A549 (cell line): ENCODE measurements at regions of chr5 and their contacts with region 1.

Region 1: DNA sequence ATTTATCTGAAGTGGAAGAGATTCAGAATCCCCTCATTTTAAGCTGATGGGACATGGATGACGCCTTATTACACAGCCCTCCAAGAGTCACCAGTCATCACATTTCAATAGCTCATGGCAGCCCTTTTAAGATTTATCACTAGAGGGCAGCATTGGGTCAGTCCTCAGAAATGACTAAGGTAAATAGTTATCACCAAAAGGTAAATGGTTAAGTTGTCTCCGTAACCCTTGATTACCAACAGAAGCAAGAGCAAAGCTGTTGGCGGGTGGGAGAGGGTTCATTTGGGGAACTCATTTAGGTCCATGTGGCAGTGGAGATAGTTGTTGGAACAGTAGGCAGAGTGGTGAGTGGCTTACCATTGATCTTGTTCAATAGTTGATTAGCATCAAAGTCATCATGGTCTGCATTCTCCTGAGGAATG is 12.0 kb upstream of the C9 start:
- DNase-seq: peak; percentile 65 to 67
- ATAC-seq: peak; percentile 85 to 95; a peak in 5 of 6 replicates
- H3K4me3 ChIP-seq: no peak overlapping the region
- H3K27ac ChIP-seq: no peak overlapping the region; a peak in 1 of 6 replicates
- H3K4me1 ChIP-seq: no peaks in the 10 kb centered on the region
- CTCF ChIP-seq: peak; percentile 95
- EP300 ChIP-seq: no peak
- POLR2A ChIP-seq: no peak
- RAD21 ChIP-seq: peak; percentile 96 to 97

Region 2: DNA sequence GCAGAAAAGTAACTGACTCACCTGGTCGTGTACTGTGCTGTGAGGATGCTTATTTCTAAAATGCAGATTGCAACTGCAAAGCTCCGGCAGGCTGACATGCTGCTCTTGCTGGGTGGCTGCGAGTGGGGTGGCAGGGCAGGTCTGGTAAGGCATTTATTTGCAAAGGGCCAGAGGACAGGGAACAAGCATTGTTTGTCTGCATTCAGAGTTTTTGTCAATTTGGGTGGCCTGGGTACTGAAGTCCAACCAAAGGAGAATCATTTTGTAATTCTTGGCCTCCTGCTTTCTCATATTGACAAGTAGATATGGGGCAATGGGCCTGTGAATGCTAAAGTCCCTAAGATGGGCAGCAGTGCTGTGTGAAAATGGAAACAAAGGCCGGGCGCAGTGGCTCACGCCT is 11.9 kb before region 1 on chr5 and contains the start of gene C9:
- CTCF ChIA-PET with region 1: interaction called, 29 read pairs
- POLR2A ChIA-PET with region 1: no interaction called
- DNase-seq: no peak
- ATAC-seq: no peak
- H3K4me3 ChIP-seq: no peak within 1 kb of the TSS
- H3K27ac ChIP-seq: no peak within 1 kb of the TSS
- H3K4me1 ChIP-seq: no peaks in the 10 kb centered on the region
- CTCF ChIP-seq: no peak
- EP300 ChIP-seq: no peak
- POLR2A ChIP-seq: no peak
- RAD21 ChIP-seq: no peak
- polyA plus RNA-seq, gene C9: 0.03 TPM in 1 of 2 replicates, not detected in the other

Region 3: GRCh38 chr5:39452846-39453245 is 76.5 kb after region 1 on chr5:
- CTCF ChIA-PET with region 1: interaction called, 11 read pairs
- POLR2A ChIA-PET with region 1: no interaction called
- DNase-seq: no peak
- ATAC-seq: no peak
- H3K4me3 ChIP-seq: no peak overlapping the region
- H3K27ac ChIP-seq: peak overlapping the region in 1 of 2 experiments; percentile 62; a peak in 2 of 6 replicates
- H3K4me1 ChIP-seq: peaks cover 32% of the 10 kb centered on the region
- CTCF ChIP-seq: no peak
- EP300 ChIP-seq: no peak
- POLR2A ChIP-seq: no peak
- RAD21 ChIP-seq: no peak

Region 4: GRCh38 chr5:39547553-39548154 is 171.3 kb after region 1 on chr5:
- CTCF ChIA-PET with region 1: interaction called, 147 read pairs
- POLR2A ChIA-PET with region 1: interaction called, 8 read pairs
- DNase-seq: peak; percentile 49 to 56
- ATAC-seq: peak in 1 of 2 experiments; percentile 83; a peak in 3 of 6 replicates
- H3K4me3 ChIP-seq: no peak overlapping the region
- H3K27ac ChIP-seq: peak overlapping the region; percentile 19 to 46; a peak in 4 of 6 replicates
- H3K4me1 ChIP-seq: peaks cover 15% of the 10 kb centered on the region; the same call in 2 of the 3 replicates
- CTCF ChIP-seq: peak; percentile 88
- EP300 ChIP-seq: no peak
- POLR2A ChIP-seq: no peak
- RAD21 ChIP-seq: peak; percentile 92 to 94